Dendritic cell treated with granulocyte-macrophage colony-stimulating factor and Interleukin-4, amounts not matched to agents 40 ng/mL and 50 ng/mL, for 4 days (primary cell): ENCODE measurements at regions of chr13 and their contacts with region 1.

Region 1: DNA sequence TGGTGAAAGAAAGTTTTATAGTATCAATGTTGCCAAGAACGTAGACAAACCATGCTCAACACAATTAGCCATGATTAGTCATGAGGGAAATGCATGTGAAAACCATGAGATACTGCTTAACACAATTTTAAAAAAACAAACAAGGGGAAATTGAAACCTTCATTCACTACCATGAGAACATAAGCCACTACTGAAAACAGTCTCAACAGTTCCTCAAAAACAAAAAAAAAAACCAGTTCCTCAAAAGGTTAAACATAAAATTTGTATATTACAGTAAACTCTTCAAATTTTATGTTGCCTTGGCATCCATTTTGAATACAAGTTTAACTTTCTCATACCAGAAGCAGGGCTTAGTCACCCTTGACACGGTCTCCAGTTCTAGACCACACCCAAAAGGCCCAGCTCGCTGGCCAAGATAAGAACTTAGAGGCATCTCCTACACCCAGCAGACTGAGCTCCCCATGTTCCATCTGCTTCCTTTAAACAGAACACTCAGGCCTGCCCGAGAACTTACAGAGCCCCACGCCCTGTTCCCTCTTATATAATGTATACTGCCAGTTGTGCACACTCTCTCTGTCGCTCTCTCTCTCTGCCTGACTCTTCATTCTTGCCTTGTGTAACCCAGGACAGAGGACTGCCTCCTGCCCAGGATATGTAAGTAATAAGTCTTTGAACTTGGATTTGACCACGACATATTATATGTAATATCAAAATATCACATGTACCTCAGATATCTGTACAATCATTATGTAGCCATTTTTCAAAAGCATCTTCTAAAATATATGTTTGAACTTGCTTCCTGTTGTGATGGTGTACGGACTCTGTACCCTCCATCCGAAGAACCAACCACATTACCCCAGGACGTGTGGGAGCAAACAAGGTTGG is 67.4 kb downstream of the STK24 start:
- H3K4me3 Mint-ChIP-seq: peak overlapping the region; percentile 21
- H3K27ac Mint-ChIP-seq: peak overlapping the region; percentile 96
- H3K4me1 Mint-ChIP-seq: peaks cover 79% of the 10 kb centered on the region
- H3K27me3 Mint-ChIP-seq: no peaks in the 10 kb centered on the region

Region 2: DNA sequence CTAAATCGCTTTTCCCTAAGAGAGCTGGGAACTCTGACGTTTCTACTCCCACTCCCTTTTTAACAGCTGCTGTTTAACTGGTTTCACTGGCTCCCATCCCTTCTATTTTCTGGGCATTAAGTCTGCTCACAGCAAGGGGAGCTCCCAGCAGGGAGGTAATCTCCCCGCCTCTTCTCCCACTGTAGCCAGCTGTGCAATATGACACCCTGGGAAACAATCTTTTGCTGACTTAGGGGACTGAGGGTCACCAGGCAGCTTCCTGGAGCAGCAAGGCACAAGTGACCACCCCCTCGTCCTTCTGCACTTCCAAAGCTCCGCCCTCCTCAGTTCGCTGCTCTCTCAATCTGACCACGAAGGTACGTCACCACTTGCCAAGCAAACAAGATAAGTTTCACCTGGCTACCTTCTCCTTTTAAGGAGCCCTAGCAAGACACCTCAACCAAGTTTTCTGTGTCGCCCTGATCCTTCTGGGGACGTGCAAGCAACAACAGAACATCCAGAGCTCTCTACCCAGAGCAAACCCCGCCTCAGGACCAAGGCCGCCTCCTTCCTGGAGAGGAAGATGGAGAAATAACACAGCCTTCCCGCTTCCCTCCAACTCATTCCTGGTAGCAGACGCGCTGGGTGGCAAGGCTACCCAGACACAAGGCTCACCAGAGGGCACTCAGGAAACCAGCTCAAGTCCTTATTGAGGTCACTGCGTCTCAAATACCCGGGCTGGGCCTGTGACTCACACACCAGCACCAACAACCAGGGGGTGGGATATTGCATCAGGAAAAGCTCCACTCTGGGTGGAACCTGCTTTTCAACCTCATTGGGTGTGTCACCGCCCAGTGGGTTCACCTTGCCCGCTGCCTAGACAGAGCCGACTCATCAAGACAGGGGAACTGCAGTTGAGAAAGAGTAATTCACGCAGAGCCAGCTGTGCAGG is 25.0 kb before region 1 on chr13:
- intact Hi-C with region 1: loop called (anchors 1 kb)
- H3K4me3 Mint-ChIP-seq: peak overlapping the region; percentile 27
- H3K27ac Mint-ChIP-seq: peak overlapping the region; percentile 29
- H3K4me1 Mint-ChIP-seq: peaks cover 77% of the 10 kb centered on the region
- H3K27me3 Mint-ChIP-seq: no peaks in the 10 kb centered on the region

Region 3: DNA sequence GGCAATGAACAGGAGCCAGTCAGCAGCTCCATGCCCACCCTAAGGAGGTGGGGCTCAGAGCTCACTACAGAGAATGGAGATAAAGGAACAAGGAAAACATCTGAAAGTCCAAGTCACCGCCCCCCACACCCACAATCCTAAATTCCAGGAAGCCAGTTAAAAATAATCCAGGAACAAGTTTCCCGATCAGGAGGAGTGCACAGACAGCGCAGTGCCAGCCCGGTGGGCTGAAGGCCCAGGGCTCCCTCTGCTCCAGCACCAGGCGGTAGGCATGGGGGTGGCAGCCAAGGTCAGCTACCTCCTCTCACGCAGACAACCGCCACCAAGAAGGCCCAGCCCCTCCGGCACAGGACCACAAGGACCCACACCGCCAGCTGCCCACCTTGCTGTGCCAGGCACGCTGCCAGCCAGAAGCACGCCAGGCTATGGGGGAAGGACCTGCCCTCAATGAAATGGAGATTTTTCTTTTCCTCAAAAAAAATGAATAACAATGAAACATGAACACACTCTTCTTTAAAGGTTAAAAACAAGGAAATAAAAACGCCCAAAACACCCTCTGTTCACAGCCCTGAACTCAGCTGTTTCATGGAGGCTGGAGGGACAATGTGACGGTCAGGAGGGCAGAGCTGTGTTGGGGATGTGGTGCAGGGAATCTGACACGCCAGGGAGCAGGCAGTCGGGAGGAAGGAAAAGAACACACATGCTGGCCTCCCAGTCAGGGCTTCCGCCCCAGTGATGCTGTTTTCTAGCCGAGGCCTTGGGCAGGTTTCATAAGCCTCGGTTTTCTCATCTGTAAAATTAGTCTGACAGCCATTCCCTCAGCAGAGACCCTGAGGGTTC is 56.4 kb after region 1 on chr13:
- intact Hi-C with region 1: loop called (anchors 5 kb)
- H3K4me3 Mint-ChIP-seq: peak overlapping the region; percentile 30
- H3K27ac Mint-ChIP-seq: peak overlapping the region; percentile 84
- H3K4me1 Mint-ChIP-seq: peaks cover 89% of the 10 kb centered on the region
- H3K27me3 Mint-ChIP-seq: no peaks in the 10 kb centered on the region

Region 4: GRCh38 chr13:98641075-98641474 is 131.6 kb after region 1 on chr13:
- intact Hi-C with region 1: no loop called
- H3K4me3 Mint-ChIP-seq: no peak overlapping the region
- H3K27ac Mint-ChIP-seq: no peak overlapping the region
- H3K4me1 Mint-ChIP-seq: peaks cover 4% of the 10 kb centered on the region
- H3K27me3 Mint-ChIP-seq: peaks cover 18% of the 10 kb centered on the region